Activated T-helper 2 cell treated with anti-CD3 and anti-CD28 coated beads, Interferon-gamma antibody, Interleukin-2, Interleukin-4, amounts not matched to agents 10 μg/mL and 5 μg/mL and 100 μg/mL, durations not matched to agents 14 hours and 24 hours and 36 hours (primary cell): ENCODE measurements at regions of chr15 and their contacts with region 1.

Region 1: DNA sequence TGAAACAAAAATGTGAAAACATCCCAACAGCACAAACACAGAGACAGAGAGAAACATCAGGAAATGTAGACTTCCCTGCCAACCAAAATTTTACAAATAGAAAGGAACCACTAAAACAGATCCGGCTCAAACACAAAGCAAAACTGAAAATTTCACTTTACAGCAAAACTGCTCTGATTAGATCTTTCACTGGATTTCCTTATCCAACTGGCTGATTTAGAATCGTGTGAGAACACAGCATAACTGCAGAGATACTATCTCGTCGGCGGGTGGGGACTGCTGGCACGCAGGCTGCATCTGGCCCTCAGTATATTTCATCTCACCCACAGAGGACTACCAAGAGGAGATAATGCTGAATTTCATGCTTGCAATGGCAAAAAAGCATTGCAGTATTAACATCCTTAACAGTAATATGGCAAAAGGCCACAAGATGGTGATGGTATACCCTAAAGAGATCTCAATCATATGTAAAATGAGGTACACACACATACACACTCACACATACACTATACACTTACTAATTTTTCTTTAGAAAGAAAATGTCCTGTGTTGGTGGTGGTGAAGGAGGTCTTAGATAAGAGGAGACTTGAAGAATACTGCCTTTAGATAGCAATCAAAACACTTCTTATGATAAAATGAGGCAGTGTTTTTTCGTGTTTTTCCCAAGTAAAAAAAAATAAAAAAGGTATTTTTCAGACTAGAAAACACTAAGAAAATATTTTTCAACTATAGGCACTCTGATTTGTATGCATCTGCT is 10.6 kb upstream of the LEO1 start:
- DNase-seq: peak; percentile 84
- H3K4me3 Mint-ChIP-seq: peak overlapping the region; percentile 77
- H3K27ac Mint-ChIP-seq: peak overlapping the region; percentile 88
- H3K4me1 Mint-ChIP-seq: peaks cover 33% of the 10 kb centered on the region
- H3K27me3 Mint-ChIP-seq: no peaks in the 10 kb centered on the region

Region 2: GRCh38 chr15:52005748-52006701 is 23.8 kb after region 1 on chr15:
- intact Hi-C with region 1: loop called (anchors 1 kb)
- DNase-seq: no peak
- H3K4me3 Mint-ChIP-seq: peak overlapping the region; percentile 26
- H3K27ac Mint-ChIP-seq: peak overlapping the region; percentile 86
- H3K4me1 Mint-ChIP-seq: peaks cover 70% of the 10 kb centered on the region
- H3K27me3 Mint-ChIP-seq: no peaks in the 10 kb centered on the region

Region 3: GRCh38 chr15:52019388-52020220 is 37.4 kb after region 1 on chr15:
- intact Hi-C with region 1: loop called (anchors 1 kb)
- DNase-seq: peak; percentile 67
- H3K4me3 Mint-ChIP-seq: peak overlapping the region; percentile 95
- H3K27ac Mint-ChIP-seq: peak overlapping the region; percentile 99
- H3K4me1 Mint-ChIP-seq: peaks cover 28% of the 10 kb centered on the region
- H3K27me3 Mint-ChIP-seq: no peaks in the 10 kb centered on the region

Region 4: DNA sequence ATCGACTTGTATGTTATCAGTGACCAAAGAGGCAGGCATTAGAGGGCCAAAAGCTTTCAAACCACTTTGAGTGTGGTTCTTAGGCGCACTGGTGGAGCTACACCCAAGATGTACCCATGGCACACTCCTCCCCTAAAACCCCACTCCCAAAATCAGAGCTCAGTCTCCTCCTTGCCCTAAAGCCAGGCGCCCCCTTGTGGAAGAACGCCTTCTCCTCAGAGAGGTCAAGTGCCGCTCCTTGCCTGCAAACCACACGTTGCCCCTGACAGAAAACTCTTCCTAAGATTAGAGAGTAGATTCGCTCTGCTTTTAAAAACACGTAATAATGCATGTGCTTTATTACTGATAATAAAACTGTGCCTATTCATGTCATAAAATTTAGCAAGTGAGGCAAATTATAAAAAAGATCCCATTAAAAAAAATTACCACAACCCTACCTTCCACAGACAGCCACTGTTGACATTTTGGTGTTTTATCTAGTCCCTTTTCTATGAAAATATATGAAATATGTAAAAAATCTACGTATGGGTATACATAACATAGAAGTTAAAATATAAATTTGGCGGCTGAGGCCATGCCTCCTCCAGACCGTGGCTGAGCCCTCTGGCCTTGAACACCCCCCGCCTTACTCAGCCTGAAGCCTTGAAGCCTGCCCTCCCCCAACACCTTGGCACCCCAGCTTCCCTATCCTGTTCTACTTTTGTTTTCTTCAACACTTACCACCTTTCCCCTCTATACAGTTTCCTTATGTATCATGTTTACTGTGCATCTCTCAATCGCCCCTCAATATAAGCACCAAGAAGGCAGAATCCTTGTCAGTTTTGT is 96.9 kb after region 1 on chr15:
- intact Hi-C with region 1: loop called (anchors 1 kb)
- DNase-seq: peak; percentile 61
- H3K4me3 Mint-ChIP-seq: no peak overlapping the region
- H3K27ac Mint-ChIP-seq: no peak overlapping the region
- H3K4me1 Mint-ChIP-seq: peaks cover 43% of the 10 kb centered on the region
- H3K27me3 Mint-ChIP-seq: no peaks in the 10 kb centered on the region

Region 5: GRCh38 chr15:52227456-52227855 is 245.3 kb after region 1 on chr15:
- intact Hi-C with region 1: loop called (anchors 2 kb)
- DNase-seq: peak; percentile 65
- H3K4me3 Mint-ChIP-seq: no peak overlapping the region
- H3K27ac Mint-ChIP-seq: no peak overlapping the region
- H3K4me1 Mint-ChIP-seq: peaks cover 21% of the 10 kb centered on the region
- H3K27me3 Mint-ChIP-seq: no peaks in the 10 kb centered on the region